ENCODE measurements at regions of chr14 and their contacts with region 1.

Region 1: GRCh38 chr14:89936658-89937185 is 17.8 kb downstream of the EFCAB11 start:
- DNase-seq: no peak
- H3K4me3 ChIP-seq: no peak overlapping the region
- H3K27ac ChIP-seq: no peak overlapping the region
- H3K4me1 ChIP-seq: no peaks in the 10 kb centered on the region
- H3K27me3 ChIP-seq: no peaks in the 10 kb centered on the region

Region 2: DNA sequence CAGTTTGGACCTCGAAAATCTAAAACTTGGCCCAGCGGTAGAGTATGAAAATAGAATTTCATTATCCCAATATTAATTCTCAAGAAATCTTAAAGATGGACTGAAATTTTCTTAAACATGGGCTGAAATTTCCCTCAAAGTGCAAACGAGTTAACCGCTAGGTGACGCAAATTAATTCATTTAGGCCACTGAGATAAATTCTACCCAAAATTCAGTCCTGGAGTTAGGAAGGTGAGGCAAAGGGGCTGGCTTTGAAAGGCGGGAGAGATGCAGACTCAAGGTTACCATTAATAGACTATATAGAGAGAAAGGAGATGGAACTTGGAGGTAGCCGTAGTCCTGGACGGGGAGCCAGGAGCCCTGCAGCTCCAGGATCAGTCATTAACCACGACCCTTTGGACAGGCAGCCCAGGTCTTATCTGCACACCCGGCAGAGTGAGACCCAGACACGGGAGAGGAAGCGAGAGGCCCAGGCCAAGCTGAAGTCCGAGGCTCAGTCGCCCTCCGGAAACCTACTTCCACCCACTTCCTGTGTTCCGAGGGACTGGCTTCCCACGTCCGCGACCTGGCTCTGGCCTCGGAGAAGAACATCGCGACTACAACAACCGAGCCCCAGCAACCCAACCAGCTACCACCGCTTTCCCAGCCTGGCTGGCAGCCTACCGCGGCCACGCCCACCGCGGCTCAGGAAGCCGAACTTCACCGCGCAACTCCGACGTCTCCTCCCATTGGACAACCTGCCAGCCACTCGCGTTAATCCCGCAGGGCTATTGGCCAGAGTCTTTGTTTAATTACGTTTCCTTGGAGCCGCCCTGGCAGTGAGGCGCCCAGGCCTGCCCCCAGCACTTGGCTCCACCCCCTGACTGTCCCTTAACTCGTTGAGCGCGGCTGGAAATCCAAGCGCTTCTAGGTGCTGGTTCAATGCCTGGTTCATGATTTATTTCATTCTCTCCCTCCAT is 17.6 kb after region 1 on chr14 and contains the start of gene EFCAB11:
- CTCF ChIA-PET with region 1: interaction called, 57 read pairs
- POLR2A ChIA-PET with region 1: no interaction called
- DNase-seq: peak; percentile 98 to 99 (median 99)
- H3K4me3 ChIP-seq: peak within 1 kb of the TSS; percentile 74 to 96 (median 90)
- H3K27ac ChIP-seq: peak within 1 kb of the TSS; percentile 50 to 93
- H3K4me1 ChIP-seq: peaks cover 7 to 32% (median 27%) of the 10 kb centered on the region in 4 experiments
- H3K27me3 ChIP-seq: no peaks in the 10 kb centered on the region

Region 3: GRCh38 chr14:90235179-90235976 is 298.7 kb after region 1 on chr14:
- CTCF ChIA-PET with region 1: interaction called, 10 read pairs
- POLR2A ChIA-PET with region 1: interaction called, 4 read pairs
- DNase-seq: peak; percentile 67 to 70 (median 69)
- H3K4me3 ChIP-seq: no peak overlapping the region
- H3K27ac ChIP-seq: no peak overlapping the region
- H3K4me1 ChIP-seq: peaks cover 0 to 5% (median 0%) of the 10 kb centered on the region in 4 experiments
- H3K27me3 ChIP-seq: peaks cover 0 to 6% (median 0%) of the 10 kb centered on the region in 5 experiments

Measured in common myeloid progenitor, CD34-positive (primary cell).